AG04450 (cell line): ENCODE measurements at regions of chr16 and their contacts with region 1.

Region 1: GRCh38 chr16:89700100-89700648 is 1.3 kb downstream of the SPATA2L start:
- DNase-seq: peak; percentile 94
- H3K4me3 ChIP-seq: peak overlapping the region; percentile 79
- H3K27ac ChIP-seq: peak overlapping the region; percentile 68
- H3K27me3 ChIP-seq: no peaks in the 10 kb centered on the region
- CTCF ChIP-seq: peak; percentile 76

Region 2: GRCh38 chr16:89653656-89654295 is 46.4 kb before region 1 on chr16:
- CTCF ChIA-PET with region 1: interaction called, 10 read pairs
- POLR2A ChIA-PET with region 1: interaction called, 4 read pairs
- DNase-seq: no peak
- H3K4me3 ChIP-seq: no peak overlapping the region
- H3K27ac ChIP-seq: no peak overlapping the region
- H3K27me3 ChIP-seq: no peaks in the 10 kb centered on the region
- CTCF ChIP-seq: no peak

Region 3: GRCh38 chr16:89686520-89687091 is 13.6 kb before region 1 on chr16 and contains the start of gene CDK10:
- CTCF ChIA-PET with region 1: interaction called, 7 read pairs
- POLR2A ChIA-PET with region 1: interaction called, 19 read pairs
- DNase-seq: peak; percentile 57
- H3K4me3 ChIP-seq: peak within 1 kb of the TSS; percentile 88
- H3K27ac ChIP-seq: peak within 1 kb of the TSS; percentile 78
- H3K27me3 ChIP-seq: no peaks in the 10 kb centered on the region
- CTCF ChIP-seq: no peak
- polyA plus RNA-seq, gene CDK10: 31.6 and 35.0 TPM in 2 replicates